Mammary epithelial cell (primary cell): ENCODE measurements at regions of chr9 and their contacts with region 1.

Region 1: GRCh38 chr9:108696156-108696555 is 159.6 kb downstream of the ACTL7B start:
- DNase-seq: no peak
- H3K4me3 ChIP-seq: no peak overlapping the region
- H3K27ac ChIP-seq: no peak overlapping the region
- H3K4me1 ChIP-seq: peaks cover 6% of the 10 kb centered on the region
- H3K27me3 ChIP-seq: no peaks in the 10 kb centered on the region
- CTCF ChIP-seq: no peak

Region 2: GRCh38 chr9:108743901-108744371 is 47.8 kb after region 1 on chr9:
- CTCF ChIA-PET with region 1: no interaction called
- dilution Hi-C with region 1: no loop called
- in situ Hi-C with region 1: no loop called
- intact Hi-C with region 1: loop called (anchors 5 kb)
- DNase-seq: peak; percentile 59
- H3K4me3 ChIP-seq: no peak overlapping the region
- H3K27ac ChIP-seq: peak overlapping the region; percentile 28
- H3K4me1 ChIP-seq: peaks cover 13% of the 10 kb centered on the region
- H3K27me3 ChIP-seq: no peaks in the 10 kb centered on the region
- CTCF ChIP-seq: no peak

Region 3: GRCh38 chr9:108903420-108904103 is 207.4 kb after region 1 on chr9:
- CTCF ChIA-PET with region 1: no interaction called
- dilution Hi-C with region 1: no loop called
- in situ Hi-C with region 1: no loop called
- intact Hi-C with region 1: no loop called
- DNase-seq: no peak
- H3K4me3 ChIP-seq: no peak overlapping the region
- H3K27ac ChIP-seq: no peak overlapping the region
- H3K4me1 ChIP-seq: no peaks in the 10 kb centered on the region
- H3K27me3 ChIP-seq: no peaks in the 10 kb centered on the region
- CTCF ChIP-seq: no peak